Astrocyte of the cerebellum (primary cell): ENCODE measurements at regions of chr3 and their contacts with region 1.

Region 1: DNA sequence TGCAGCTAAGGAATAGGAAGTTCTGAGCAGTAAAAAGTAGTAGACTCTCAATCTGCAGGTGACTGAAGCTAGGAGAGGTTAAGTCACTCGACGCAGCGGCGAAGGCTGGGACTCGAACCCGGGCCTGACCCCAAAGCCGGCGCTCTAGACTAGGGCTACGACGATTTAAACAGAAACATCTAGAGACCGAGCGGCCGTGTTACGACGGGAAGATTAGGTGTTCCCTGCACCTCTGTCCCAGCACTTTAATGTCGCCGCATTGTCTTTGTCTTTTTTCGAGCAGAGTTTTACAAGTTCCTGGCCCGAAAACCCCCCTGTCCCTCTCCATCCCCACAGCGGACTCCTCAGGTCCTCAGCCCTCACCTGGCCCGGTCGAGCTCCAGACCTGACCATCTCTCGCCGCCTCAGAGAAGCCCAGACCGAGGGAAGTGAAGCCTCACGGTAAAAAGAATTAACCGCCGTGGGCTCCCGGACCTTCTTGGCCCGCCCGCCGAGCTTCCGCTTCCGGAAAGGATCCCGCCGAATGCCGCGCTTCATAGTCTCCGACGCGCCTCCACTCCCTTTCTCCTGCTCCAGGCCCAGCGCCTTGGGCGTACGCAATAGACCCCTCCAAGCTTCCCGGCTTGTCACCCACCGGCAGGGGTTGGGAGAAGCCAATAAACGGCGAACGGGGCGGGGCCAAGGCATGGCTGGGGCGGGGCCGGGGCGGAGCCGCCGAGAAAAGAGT is at the start of gene CCDC14:
- DNase-seq: peak; percentile 93
- H3K4me3 ChIP-seq: peak within 1 kb of the TSS; percentile 95
- CTCF ChIP-seq: no peak

Region 2: DNA sequence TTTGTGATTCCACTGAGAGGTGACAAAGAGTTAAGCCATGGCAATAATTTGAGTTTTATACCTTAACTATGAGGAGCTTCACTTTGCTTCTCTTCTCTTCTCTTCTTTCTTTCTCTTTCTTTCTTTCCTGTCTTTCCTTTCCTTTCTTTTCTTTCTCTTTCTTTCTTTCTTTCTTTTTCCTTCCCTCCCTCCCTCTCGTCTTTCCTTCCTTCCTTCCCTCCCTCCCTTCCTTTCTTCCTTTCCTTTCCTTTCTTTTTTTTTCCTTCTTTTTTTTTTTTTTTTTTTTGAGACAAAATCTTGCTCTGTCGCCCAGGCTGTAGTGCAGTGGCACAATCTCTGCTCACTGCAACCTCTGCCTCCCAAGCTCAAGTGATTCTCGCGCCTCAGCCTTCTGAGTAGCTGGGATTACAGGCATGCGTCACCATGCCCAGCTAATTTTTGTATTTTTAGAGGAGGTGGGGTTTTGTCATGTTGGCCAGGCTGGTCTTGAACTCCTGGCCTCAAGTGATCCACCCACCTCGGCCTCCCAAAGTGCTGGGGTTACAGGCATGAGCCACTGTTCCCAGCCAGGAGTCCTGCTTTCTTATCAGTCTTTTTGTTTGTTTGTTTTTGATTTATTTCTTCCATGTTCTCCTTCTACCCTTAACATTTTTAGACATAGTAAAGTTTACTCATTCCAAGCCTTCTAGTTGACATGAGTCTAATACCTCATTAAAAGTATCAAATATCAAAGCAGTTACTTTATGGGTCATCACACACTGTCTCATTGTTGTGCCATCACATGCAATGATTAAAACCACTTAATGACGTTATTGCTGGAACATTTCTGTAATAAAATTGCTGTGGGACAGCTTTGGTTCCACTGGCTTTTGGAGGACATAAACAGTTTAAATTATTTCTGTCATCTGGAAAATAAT is 1136.2 kb before region 1 on chr3:
- in situ Hi-C with region 1: no loop called
- DNase-seq: no peak
- H3K4me3 ChIP-seq: no peak overlapping the region
- CTCF ChIP-seq: no peak

Region 3: DNA sequence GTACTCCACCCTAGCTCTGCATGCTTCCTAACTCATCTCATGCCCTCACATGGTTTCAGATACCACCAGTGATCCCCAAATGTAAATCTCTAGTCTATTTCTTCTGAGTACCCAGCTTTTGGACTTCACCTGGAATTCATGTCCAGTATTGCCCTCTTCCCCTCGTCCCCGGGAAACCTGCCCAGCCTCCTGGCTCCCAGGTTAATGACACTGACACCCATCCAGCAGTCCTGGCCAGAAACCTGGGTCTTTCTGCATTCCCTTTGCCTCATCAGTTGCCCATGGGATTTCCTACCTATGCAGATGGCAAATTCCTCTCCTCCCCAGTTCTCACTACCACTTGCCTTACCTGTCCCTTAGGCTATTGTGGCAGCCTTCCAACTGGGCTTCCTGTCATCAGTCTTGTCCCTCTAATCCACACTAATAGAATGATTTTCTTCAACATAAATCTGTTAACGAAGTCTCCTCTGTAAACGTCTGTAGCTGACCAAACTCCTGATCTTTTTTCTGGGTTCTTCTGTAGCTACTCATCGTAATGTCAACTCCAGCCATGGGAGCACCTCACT is 61.6 kb before region 1 on chr3:
- in situ Hi-C with region 1: loop called (anchors 5 kb)
- DNase-seq: no peak
- H3K4me3 ChIP-seq: no peak overlapping the region
- CTCF ChIP-seq: no peak

Region 4: DNA sequence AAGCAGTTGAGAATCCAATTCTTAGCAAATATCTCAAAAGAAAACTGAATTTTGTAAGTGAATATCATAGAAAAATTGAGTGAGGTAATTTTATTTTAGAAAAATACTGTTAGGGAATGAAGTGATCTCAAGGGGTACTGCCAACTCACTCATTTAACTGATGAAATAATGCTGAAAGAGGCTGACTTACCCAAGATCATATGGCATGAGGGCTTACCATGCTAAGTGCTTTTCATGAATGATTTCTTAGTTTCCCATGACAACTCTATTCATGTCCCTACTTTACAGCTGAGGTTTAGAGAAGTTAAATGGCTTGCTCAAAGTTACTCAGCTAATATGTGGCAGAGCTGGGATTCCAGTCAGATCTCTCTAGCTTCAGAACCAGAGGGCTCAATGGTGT is 30.5 kb before region 1 on chr3:
- in situ Hi-C with region 1: no loop called
- DNase-seq: no peak
- H3K4me3 ChIP-seq: no peak overlapping the region
- CTCF ChIP-seq: no peak